ENCODE measurements at regions of chr15 and their contacts with region 1.

Region 1: GRCh38 chr15:75201609-75202250 is at the start of gene C15orf39:
- DNase-seq: peak; percentile 80 to 88 (median 82)
- H3K4me3 ChIP-seq: peak within 1 kb of the TSS; percentile 95 to 97 (median 97)
- H3K4me3 Mint-ChIP-seq: peak within 1 kb of the TSS; percentile 94 to 96
- H3K27ac ChIP-seq: peak within 1 kb of the TSS; percentile 82 to 97
- H3K27ac Mint-ChIP-seq: peak within 1 kb of the TSS; percentile 89 to 96 (median 93)
- H3K4me1 ChIP-seq: peaks cover 59 to 74% of the 10 kb centered on the region in 2 donors
- H3K4me1 Mint-ChIP-seq: peaks cover 61% of the 10 kb centered on the region
- H3K27me3 ChIP-seq: no peaks in the 10 kb centered on the region
- H3K27me3 Mint-ChIP-seq: peaks cover 3 to 7% (median 4%) of the 10 kb centered on the region in 3 donors
- CTCF ChIP-seq: peak; percentile 99
- polyA plus RNA-seq, gene C15orf39: 8.9 to 80.7 (median 18.2) TPM

Region 2: DNA sequence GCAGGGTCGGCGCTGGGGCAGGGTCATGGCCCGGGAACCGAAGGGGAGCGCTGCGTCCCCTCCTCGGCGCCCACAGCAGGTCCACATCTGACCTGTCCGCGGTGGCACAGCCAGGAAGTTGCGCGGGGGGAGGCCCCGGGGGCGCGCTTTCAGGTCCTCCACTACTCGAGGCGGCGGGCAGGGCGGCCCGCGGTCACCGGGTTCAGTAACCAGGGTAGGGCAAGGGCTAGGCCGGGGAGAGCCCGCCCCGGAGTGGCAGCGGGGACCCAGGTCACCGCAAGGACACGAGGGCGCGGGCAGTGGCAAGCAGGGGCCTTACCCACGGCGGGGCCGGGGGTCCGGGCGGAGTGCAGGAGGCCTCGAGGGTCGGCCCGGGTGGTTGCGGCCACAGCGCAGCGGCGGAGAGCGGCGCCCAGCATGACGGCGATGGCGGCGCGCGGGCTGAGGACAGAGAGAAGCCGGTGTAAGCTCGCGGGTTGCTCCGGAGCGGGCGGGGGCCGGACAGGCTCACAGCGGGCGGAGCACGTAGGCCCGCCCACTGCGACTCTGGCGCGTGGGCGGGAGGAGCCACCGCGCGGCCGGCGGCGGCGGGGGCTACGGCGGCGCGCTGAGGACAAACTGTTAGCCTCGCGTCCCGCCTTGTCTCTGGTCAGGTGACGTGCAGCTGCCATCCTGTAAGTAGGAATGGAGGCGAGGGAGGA is 264.0 kb before region 1 on chr15 and contains the start of gene COX5A:
- intact Hi-C with region 1: loop called in 1 of 2 experiments (anchors 5 kb)
- DNase-seq: peak; percentile 91 to 96 (median 94)
- H3K4me3 ChIP-seq: peak within 1 kb of the TSS; percentile 69 to 92 (median 81)
- H3K4me3 Mint-ChIP-seq: peak within 1 kb of the TSS; percentile 78 to 92
- H3K27ac ChIP-seq: peak within 1 kb of the TSS; percentile 77 to 88
- H3K27ac Mint-ChIP-seq: peak within 1 kb of the TSS; percentile 82 to 94 (median 91)
- H3K4me1 ChIP-seq: peaks cover 16 to 29% of the 10 kb centered on the region in 2 donors
- H3K4me1 Mint-ChIP-seq: peaks cover 26% of the 10 kb centered on the region
- H3K27me3 ChIP-seq: no peaks in the 10 kb centered on the region
- H3K27me3 Mint-ChIP-seq: peaks cover 0 to 1% (median 1%) of the 10 kb centered on the region in 3 donors
- CTCF ChIP-seq: no peak
- polyA plus RNA-seq, gene COX5A: 127 to 498 (median 434) TPM

Region 3: DNA sequence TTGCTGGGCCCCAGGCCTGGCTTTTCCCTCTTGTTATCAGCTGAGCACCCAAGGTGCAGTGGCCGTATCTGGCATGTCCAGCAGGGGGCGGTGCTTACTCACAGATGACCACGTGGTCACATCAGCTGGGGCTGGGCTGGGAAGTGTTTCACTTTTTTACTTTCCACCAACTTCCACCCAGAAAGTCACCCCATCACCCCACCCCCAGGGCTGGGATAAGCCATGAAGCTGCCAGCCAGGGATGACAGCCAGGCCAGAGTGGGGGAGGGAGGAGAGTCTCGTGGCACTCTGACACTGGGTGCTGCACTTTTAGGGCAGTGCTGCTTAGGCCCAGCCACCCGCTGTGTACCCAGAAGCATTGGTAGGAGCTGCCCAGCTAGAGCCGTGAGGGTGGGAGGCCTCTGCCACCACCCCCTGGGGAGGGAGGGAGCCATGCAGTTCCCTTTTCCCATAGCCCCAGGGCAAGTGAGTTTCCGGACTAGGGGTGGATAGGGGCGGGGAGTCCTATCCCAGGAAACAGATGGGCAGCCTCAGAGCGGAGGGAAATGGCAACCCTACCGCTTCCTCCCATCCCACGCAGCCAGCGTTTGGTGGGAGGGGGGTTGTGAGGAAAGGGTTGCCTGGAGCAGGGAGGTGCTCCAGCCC is 172.2 kb before region 1 on chr15:
- intact Hi-C with region 1: loop called (anchors 1 to 2 kb)
- DNase-seq: peak; percentile 90 to 94 (median 94)
- H3K4me3 ChIP-seq: peak overlapping the region in 2 of 3 experiments; percentile 12 to 64
- H3K4me3 Mint-ChIP-seq: peak overlapping the region; percentile 65 to 84
- H3K27ac ChIP-seq: peak overlapping the region; percentile 82 to 84
- H3K27ac Mint-ChIP-seq: peak overlapping the region; percentile 83 to 92 (median 89)
- H3K4me1 ChIP-seq: peaks cover 70 to 71% of the 10 kb centered on the region in 2 donors
- H3K4me1 Mint-ChIP-seq: peaks cover 66% of the 10 kb centered on the region
- H3K27me3 ChIP-seq: no peaks in the 10 kb centered on the region
- H3K27me3 Mint-ChIP-seq: peaks cover 0 to 1% (median 0%) of the 10 kb centered on the region in 3 donors
- CTCF ChIP-seq: peak; percentile 81

Region 4: DNA sequence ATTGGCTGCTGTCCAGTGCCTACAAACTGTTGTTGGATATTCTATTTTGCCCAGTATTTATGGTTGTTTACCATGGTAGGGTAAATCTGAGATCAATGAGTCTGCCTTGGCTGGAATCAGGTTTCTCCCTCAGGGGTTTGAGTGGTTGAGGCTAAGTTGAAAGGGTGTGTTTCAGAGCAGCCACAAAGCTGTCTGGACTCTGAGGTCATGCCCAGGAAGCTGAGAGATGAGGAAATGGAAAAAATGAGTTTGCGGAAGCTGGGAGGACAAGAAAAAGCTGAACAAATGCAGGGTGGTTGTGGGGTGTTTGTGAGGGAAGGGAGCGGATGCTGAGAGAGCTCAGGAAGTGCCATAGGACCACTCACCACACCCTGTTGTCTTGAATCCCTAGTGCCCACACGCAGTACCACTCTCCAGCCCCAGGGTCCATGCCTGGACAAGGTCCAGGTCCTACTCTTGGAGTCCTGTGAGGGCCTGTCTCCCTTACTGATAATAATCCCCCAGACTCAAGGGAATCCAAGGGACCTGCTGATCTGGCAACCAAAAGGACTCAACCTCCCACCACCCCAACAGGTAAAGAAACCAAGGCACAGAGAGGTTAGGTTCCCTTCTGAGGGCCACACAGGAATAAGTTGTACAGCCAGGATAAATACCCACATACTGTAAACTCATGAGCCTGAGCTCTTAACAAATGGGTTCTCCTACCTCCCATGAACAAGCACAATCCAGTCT is 96.8 kb before region 1 on chr15:
- intact Hi-C with region 1: loop called (anchors 5 kb)
- DNase-seq: peak; percentile 88 to 95 (median 95)
- H3K4me3 ChIP-seq: peak overlapping the region in 1 of 3 experiments; percentile 26
- H3K4me3 Mint-ChIP-seq: peak overlapping the region; percentile 32 to 44
- H3K27ac ChIP-seq: peak overlapping the region; percentile 77 to 93
- H3K27ac Mint-ChIP-seq: peak overlapping the region; percentile 87 to 97 (median 94)
- H3K4me1 ChIP-seq: peaks cover 53 to 57% of the 10 kb centered on the region in 2 donors
- H3K4me1 Mint-ChIP-seq: peaks cover 61% of the 10 kb centered on the region
- H3K27me3 ChIP-seq: no peaks in the 10 kb centered on the region
- H3K27me3 Mint-ChIP-seq: peaks cover 0 to 5% (median 0%) of the 10 kb centered on the region in 3 donors
- CTCF ChIP-seq: no peak

Region 5: GRCh38 chr15:75130597-75131268 is 71.0 kb before region 1 on chr15:
- intact Hi-C with region 1: loop called (anchors 2 to 5 kb)
- DNase-seq: peak in 2 of 3 donors; percentile 44 to 76
- H3K4me3 ChIP-seq: peak overlapping the region; percentile 2 to 69 (median 7)
- H3K4me3 Mint-ChIP-seq: peak overlapping the region; percentile 70 to 78
- H3K27ac ChIP-seq: peak overlapping the region; percentile 90 to 91
- H3K27ac Mint-ChIP-seq: peak overlapping the region; percentile 96 to 99 (median 97)
- H3K4me1 ChIP-seq: peaks cover 72 to 81% of the 10 kb centered on the region in 2 donors
- H3K4me1 Mint-ChIP-seq: peaks cover 69% of the 10 kb centered on the region
- H3K27me3 ChIP-seq: no peaks in the 10 kb centered on the region
- H3K27me3 Mint-ChIP-seq: no peaks in the 10 kb centered on the region
- CTCF ChIP-seq: no peak

Region 6: GRCh38 chr15:75161917-75162414 is 39.8 kb before region 1 on chr15:
- intact Hi-C with region 1: loop called in 1 of 2 experiments (anchors 5 kb)
- DNase-seq: peak; percentile 65 to 80 (median 78)
- H3K4me3 ChIP-seq: no peak overlapping the region
- H3K4me3 Mint-ChIP-seq: peak overlapping the region in 1 of 2 donors; percentile 39
- H3K27ac ChIP-seq: peak overlapping the region; percentile 63 to 70
- H3K27ac Mint-ChIP-seq: peak overlapping the region; percentile 87 to 95 (median 91)
- H3K4me1 ChIP-seq: peaks cover 58 to 71% of the 10 kb centered on the region in 2 donors
- H3K4me1 Mint-ChIP-seq: peaks cover 57% of the 10 kb centered on the region
- H3K27me3 ChIP-seq: no peaks in the 10 kb centered on the region
- H3K27me3 Mint-ChIP-seq: peaks cover 0 to 5% (median under 1%) of the 10 kb centered on the region in 3 donors
- CTCF ChIP-seq: no peak

Region 7: DNA sequence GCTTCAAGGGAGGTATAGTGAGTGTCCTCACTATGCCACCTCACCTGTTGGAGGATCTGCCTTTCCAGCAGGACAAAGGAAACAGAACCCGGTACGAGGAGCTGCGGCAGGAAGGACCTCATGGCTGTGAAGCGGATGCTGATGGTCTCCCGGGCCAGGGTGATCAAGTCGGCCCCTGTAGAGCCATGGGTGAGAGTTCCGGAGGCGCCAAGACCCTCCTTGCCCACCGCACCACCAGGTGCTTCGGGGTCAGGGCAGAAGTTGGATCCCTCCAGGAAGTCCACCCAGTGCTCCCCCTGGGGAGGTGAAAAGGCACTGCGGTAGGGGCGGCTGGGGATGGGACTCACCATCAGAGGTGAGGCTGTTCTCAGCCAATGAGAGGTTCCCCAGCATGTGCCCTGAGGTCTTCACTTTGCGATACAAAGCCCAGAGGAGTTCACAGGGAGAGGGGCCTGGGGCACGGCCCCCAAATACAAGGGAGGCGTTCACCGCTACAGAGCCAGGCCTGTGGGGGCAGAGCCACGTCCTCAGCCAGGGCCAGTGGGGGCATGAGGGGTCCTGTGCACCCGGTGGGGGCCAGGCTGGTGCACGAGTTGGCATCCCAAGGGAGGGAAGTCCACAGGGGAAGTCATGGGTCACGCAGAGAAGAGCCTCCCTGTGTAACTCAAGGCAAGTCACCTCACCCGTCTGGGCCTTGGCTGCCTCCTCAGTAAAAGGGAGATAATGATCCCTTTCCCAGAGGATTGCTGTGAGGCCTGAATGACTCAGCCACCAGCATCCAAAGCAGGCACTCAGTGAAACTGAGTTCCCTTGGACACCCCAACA is 27.7 kb after region 1 on chr15:
- intact Hi-C with region 1: no loop called
- DNase-seq: no peak
- H3K4me3 ChIP-seq: no peak overlapping the region
- H3K4me3 Mint-ChIP-seq: no peak overlapping the region
- H3K27ac ChIP-seq: no peak overlapping the region
- H3K27ac Mint-ChIP-seq: no peak overlapping the region
- H3K4me1 ChIP-seq: no peaks in the 10 kb centered on the region
- H3K4me1 Mint-ChIP-seq: no peaks in the 10 kb centered on the region
- H3K27me3 ChIP-seq: no peaks in the 10 kb centered on the region
- H3K27me3 Mint-ChIP-seq: peaks cover 11 to 28% (median 13%) of the 10 kb centered on the region in 3 donors
- CTCF ChIP-seq: no peak

Region 8: DNA sequence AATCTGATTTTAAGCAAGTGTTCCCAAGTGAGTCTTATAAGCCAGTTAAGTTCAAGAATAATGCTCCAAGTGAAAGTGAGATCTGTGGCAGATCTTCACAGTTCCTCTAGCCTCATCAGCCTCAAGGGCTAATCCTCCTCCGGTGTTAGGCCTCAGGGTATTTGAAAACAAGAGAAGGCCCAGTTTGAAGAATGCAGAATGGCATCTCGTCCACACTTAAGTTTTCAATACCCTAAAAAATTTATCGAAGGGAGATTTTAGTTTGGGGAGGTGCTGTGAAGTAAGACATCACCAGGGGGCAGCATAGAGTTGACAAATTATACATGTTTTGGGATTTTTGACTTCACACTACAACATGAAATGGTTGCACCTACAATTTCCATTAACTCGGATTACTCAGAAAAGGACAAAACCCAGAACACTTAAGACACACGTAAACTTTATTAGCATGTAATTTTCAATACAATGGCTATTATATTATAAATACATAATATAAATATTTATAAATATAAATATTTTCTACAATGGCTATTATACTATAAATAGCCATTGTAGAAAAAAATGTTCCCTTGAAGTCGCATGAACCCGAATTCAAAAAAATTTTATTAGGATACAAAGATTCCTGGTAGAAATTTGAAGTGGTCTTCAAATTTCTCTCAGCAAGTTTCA is 855.7 kb after region 1 on chr15:
- intact Hi-C with region 1: no loop called
- DNase-seq: peak; percentile 31 to 52 (median 51)
- H3K4me3 ChIP-seq: peak overlapping the region; percentile 48 to 85 (median 78)
- H3K4me3 Mint-ChIP-seq: peak overlapping the region; percentile 70 to 83
- H3K27ac ChIP-seq: peak overlapping the region in 1 of 2 donors; percentile 73
- H3K27ac Mint-ChIP-seq: peak overlapping the region in 4 of 7 donors; percentile 55 to 80 (median 76)
- H3K4me1 ChIP-seq: peaks cover 25 to 32% of the 10 kb centered on the region in 2 donors
- H3K4me1 Mint-ChIP-seq: peaks cover 31% of the 10 kb centered on the region
- H3K27me3 ChIP-seq: peaks cover 26 to 33% of the 10 kb centered on the region in 2 donors
- H3K27me3 Mint-ChIP-seq: peaks cover 22 to 38% (median 38%) of the 10 kb centered on the region in 3 donors
- CTCF ChIP-seq: peak; percentile 88

Measured in CD14-positive monocyte (primary cell).